ENCODE measurements at regions of chr1 and their contacts with region 1.

Region 1: DNA sequence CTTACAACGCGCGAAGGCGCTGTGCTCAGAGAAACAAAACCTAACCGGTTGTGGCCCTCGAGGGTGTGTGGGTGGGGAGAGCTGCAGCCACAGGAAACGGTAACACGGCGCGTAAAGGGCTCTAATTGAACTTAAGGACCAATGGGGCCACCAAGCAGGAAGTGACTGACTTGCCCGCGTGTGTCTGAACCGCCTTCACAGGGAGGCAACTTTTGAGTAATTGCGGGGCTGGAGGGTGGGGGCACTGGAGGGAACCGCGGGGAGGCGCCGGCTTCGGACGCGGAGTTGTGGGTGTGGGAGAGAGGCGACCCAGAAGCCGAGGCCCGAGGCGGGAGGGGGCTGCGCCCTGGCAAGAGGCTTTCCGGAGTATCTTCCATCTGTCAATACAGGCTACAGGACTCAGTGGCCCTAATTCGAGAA is 577 bp upstream of the PNRC2 start:
- DNase-seq: peak; percentile 98
- H3K4me3 ChIP-seq: peak overlapping the region; percentile 91
- H3K27ac ChIP-seq: peak overlapping the region; percentile 97
- H3K4me1 ChIP-seq: peaks cover 64% of the 10 kb centered on the region
- CTCF ChIP-seq: peak; percentile 69

Region 2: GRCh38 chr1:23344111-23344986 is 614.7 kb before region 1 on chr1 and contains the start of gene HNRNPR:
- CTCF ChIA-PET with region 1: no interaction called
- POLR2A ChIA-PET with region 1: no interaction called
- intact Hi-C with region 1: loop called (anchors 5 kb)
- DNase-seq: peak; percentile 100
- H3K4me3 ChIP-seq: peak within 1 kb of the TSS; percentile 94
- H3K27ac ChIP-seq: peak within 1 kb of the TSS; percentile 71
- H3K4me1 ChIP-seq: peaks cover 33% of the 10 kb centered on the region
- CTCF ChIP-seq: no peak
- total RNA-seq, gene HNRNPR: 193 and 260 TPM in 2 replicates

Region 3: DNA sequence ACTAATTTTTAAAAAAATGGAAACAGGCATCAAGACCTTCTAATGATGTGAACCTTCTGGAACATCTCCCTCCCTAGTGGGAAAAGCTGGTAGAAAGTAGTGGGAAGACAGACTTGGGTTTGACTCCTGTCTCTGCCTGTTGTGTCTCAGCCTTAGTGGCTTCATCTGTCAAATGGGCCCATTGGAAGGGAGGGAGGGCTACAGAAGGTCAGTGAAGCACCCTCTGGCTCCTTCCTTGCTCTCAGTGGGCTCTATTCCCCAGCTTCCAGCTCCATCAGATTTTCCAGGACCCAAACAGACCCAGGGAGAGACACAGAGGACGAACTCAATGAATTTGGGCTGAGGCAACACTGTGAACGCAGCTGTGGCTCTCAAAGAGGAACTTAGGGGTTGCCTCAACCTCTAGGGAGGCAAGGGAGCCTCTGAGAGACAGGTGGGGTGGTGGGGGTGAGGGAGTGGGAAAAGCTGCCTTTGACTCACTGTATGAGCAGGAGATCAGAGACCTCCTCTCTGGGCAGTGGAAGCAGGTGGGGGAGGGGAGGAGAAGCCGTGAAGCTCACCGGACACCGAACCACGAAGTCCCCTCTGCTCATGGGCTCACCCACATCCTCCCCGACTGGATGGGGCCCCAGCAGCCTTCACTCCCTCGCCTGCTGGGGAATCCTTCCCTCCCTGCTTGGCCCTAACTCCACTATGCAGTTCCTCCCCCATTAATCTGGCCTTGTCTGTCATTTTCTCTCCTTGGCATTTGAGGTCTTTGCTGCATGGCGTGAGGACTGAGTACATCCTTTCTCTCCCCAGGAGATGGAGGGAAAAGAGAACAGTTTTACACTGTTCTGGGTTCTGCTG is 50.3 kb before region 1 on chr1:
- CTCF ChIA-PET with region 1: interaction called, 4 read pairs
- POLR2A ChIA-PET with region 1: interaction called, 10 read pairs
- intact Hi-C with region 1: no loop called
- DNase-seq: peak; percentile 98
- H3K4me3 ChIP-seq: peak overlapping the region; percentile 76
- H3K27ac ChIP-seq: peak overlapping the region; percentile 95
- H3K4me1 ChIP-seq: peaks cover 92% of the 10 kb centered on the region
- CTCF ChIP-seq: no peak

Region 4: GRCh38 chr1:23930861-23931490 is 28.1 kb before region 1 on chr1:
- CTCF ChIA-PET with region 1: interaction called, 4 read pairs
- POLR2A ChIA-PET with region 1: interaction called, 77 read pairs
- intact Hi-C with region 1: loop called (anchors 1 kb)
- DNase-seq: peak; percentile 88
- H3K4me3 ChIP-seq: peak overlapping the region; percentile 62
- H3K27ac ChIP-seq: peak overlapping the region; percentile 93
- H3K4me1 ChIP-seq: peaks cover 75% of the 10 kb centered on the region
- CTCF ChIP-seq: no peak

Region 5: DNA sequence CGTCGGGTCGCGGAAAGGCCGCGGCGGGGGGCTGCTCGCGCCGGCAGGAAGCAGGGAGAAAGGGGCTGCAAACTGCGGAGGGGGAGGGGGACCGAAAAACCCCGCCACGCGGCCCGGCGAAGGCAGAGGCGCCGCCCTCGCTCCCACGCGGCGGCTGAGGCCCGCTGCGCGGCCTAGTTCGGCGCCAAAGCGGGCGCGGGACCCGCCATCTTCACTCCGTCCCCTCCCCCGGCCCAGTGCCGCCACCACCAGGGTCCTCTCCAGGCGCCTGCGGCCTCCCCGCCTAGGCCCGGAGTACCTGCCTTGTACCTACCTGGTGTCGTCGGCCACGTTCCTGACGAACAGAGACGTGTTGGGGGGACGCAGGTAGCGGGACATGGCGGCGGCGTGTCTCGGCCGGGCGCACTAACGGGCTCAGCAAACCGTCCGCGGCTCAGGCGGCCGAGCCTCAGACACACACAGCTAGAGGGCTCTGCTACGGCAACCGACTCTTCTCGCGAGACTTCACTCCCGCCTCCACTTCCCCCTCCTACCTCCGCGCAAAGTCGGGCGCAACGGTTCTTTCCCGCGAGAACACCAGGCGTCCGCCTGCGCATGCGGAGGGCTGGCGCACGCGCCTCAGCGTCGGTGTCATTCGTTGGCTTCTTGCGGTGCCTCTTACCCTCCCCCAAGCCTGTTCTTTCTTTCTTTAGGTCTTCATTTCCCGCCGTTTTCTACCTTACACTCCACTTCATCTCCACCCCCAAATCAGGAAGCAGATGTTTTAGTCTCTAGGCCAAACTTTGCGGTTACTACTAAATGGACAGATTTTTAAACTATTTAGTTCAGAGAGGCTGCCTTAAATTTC is 21.1 kb after region 1 on chr1 and contains the start of gene SRSF10:
- CTCF ChIA-PET with region 1: no interaction called
- POLR2A ChIA-PET with region 1: interaction called, 16 read pairs
- intact Hi-C with region 1: loop called (anchors 1 kb)
- DNase-seq: peak; percentile 100
- H3K4me3 ChIP-seq: peak within 1 kb of the TSS; percentile 96
- H3K27ac ChIP-seq: peak within 1 kb of the TSS; percentile 94
- H3K4me1 ChIP-seq: peaks cover 70% of the 10 kb centered on the region
- CTCF ChIP-seq: peak; percentile 45
- total RNA-seq, gene SRSF10: 229 and 293 TPM in 2 replicates

Region 6: DNA sequence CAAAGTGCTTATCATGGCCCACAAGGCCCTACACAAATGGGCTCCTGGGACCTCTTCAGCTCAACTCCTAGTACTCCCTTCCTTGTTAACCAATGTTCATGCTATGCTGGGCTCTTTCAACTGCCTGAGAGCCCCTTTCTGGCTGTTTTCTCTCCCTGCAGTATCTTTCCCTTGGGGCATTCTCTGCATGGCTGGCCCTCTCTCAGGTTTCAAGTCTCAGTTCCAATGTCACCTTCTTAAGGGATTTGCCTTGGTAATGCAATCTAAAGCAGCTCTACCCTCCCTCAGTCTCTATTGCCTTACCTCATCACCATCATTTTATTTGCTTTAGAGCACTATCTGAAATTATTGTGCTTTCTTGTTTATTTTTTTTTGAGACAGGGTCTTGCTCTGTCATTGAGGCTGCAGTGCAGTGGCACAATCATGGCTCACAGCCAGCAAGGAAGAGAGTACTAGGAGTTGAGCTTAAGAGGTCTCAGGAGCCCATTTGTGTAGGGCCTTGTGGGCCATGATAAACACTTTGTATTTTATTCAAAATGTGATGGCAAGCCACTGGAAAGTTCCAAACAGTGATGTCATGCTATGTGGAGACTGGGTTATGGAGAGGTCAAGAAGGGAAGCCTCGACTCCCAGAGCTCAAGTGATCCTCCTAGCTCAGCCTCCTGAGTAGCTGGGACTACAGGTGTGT is 84.4 kb after region 1 on chr1:
- CTCF ChIA-PET with region 1: no interaction called
- POLR2A ChIA-PET with region 1: no interaction called
- intact Hi-C with region 1: no loop called
- DNase-seq: no peak
- H3K4me3 ChIP-seq: no peak overlapping the region
- H3K27ac ChIP-seq: no peak overlapping the region
- H3K4me1 ChIP-seq: no peaks in the 10 kb centered on the region
- CTCF ChIP-seq: no peak

Region 7: GRCh38 chr1:24186993-24187805 is 228.1 kb after region 1 on chr1 and contains the start of gene IFNLR1:
- CTCF ChIA-PET with region 1: no interaction called
- POLR2A ChIA-PET with region 1: interaction called, 3 read pairs
- intact Hi-C with region 1: loop called (anchors 5 kb)
- DNase-seq: peak; percentile 91
- H3K4me3 ChIP-seq: peak within 1 kb of the TSS; percentile 97
- H3K27ac ChIP-seq: peak within 1 kb of the TSS; percentile 100
- H3K4me1 ChIP-seq: peaks cover 81% of the 10 kb centered on the region
- CTCF ChIP-seq: no peak
- total RNA-seq, gene IFNLR1: 24.6 and 29.4 TPM in 2 replicates

Region 8: DNA sequence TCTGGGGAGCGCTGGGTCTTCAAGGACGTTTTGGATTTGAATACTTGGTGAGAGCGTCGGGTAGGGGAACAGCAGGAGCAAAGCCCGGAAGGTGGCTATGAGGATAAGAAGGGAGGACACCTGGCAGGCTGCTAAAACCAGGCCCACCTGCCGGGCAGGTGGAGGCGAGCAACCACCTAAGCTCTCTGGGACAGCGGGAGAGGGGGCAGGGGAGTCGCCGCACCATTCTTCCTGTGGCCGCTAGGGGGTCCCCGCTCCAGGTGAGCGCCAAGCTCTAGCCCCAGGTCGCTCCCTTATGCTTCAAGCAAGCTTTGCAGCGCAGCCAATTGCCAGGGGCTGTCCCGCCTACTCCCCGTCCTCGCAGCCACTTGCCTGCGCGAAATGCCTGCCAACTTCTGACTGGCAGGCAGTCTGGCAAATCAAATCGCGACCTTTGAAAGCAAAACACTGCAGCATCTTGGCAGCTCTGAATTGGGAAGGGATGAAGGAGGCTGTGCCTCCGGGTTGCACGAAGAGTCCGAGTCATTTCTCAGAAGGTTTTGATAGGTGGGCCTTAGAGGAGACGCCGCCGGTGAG is 456.4 kb after region 1 on chr1 and contains the start of gene NIPAL3:
- CTCF ChIA-PET with region 1: no interaction called
- POLR2A ChIA-PET with region 1: no interaction called
- intact Hi-C with region 1: no loop called
- DNase-seq: peak; percentile 100
- H3K4me3 ChIP-seq: peak within 1 kb of the TSS; percentile 79
- H3K27ac ChIP-seq: no peak within 1 kb of the TSS
- H3K4me1 ChIP-seq: peaks cover 34% of the 10 kb centered on the region
- CTCF ChIP-seq: peak; percentile 75
- total RNA-seq, gene NIPAL3: 6.7 and 11.7 TPM in 2 replicates